Tibial artery (tissue), 4 donors: ENCODE measurements at regions of chr4 and their contacts with region 1.

Region 1: DNA sequence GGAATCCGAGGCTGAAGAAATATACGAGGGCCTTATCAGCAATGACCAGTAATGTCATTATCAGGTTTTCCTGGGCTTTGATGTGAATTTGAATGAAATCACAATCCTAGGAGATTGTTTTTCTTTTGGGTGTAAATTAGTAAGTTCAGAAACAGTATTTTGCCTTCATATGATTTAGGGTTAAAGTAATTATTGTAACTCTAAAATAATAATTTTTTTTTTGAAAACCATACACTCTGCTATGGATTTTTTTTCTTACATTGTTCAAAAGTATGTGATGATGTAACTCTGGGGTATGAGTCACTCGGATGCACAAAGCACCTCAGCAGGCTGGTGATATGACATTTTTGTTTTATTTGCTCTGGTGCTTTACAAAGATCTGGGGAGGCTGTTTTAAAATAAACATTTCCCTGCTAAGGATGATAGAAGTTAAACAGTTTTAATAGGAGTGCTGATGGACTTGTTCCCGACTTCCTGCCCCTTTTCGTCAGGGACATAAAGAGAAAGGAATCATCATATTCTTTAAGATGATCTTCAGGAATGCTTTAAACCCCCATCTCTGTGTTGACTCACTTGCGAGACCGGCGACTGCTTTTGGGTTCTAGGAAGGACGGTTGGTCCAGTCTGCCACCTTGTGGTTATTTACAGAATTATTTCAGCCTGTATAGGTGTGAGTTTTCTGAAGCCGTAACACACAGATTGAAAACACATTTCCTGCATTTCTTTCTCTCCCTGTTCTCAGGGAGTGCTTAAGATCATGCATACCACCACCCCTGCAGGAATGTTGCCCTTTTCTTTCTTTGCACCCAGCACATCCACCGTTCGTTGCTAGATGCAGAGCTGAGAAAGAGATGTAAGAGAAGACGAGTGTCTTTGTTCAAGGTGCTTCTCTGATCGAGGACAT is 72.5 kb downstream of the RAPGEF2 start:
- DNase-seq: peak; percentile 68 to 70
- H3K4me3 ChIP-seq: no peak overlapping the region
- H3K27ac ChIP-seq: peak overlapping the region in 1 of 2 donors; percentile 7
- H3K4me1 ChIP-seq: peaks cover 0 to 85% (median 35%) of the 10 kb centered on the region in 4 donors
- H3K27me3 ChIP-seq: no peaks in the 10 kb centered on the region
- CTCF ChIP-seq: peak; percentile 79 to 80

Region 2: GRCh38 chr4:158729716-158730559 is 445.4 kb before region 1 on chr4:
- intact Hi-C with region 1: loop called (anchors 10 kb)
- DNase-seq: peak; percentile 58 to 73
- H3K4me3 ChIP-seq: no peak overlapping the region
- H3K27ac ChIP-seq: no peak overlapping the region
- H3K4me1 ChIP-seq: peaks cover 0 to 6% (median 0%) of the 10 kb centered on the region in 4 donors
- H3K27me3 ChIP-seq: no peaks in the 10 kb centered on the region
- CTCF ChIP-seq: peak; percentile 96

Region 3: GRCh38 chr4:159102622-159103383 is 72.5 kb before region 1 on chr4 and contains the start of gene RAPGEF2:
- intact Hi-C with region 1: loop called (anchors 10 kb)
- DNase-seq: peak; percentile 91 to 96
- H3K4me3 ChIP-seq: peak within 1 kb of the TSS; percentile 89 to 99
- H3K27ac ChIP-seq: peak within 1 kb of the TSS; percentile 96 to 99
- H3K4me1 ChIP-seq: peaks cover 0 to 29% (median 17%) of the 10 kb centered on the region in 4 donors
- H3K27me3 ChIP-seq: no peaks in the 10 kb centered on the region
- CTCF ChIP-seq: no peak

Region 4: GRCh38 chr4:159160242-159160641 is 15.1 kb before region 1 on chr4:
- intact Hi-C with region 1: no loop called
- DNase-seq: no peak
- H3K4me3 ChIP-seq: no peak overlapping the region
- H3K27ac ChIP-seq: no peak overlapping the region
- H3K4me1 ChIP-seq: peaks cover 0 to 24% (median 5%) of the 10 kb centered on the region in 4 donors
- H3K27me3 ChIP-seq: no peaks in the 10 kb centered on the region
- CTCF ChIP-seq: no peak